T-cell (primary cell): ENCODE measurements at regions of chr2 and their contacts with region 1.

Region 1: GRCh38 chr2:85611705-85612587 is at the start of gene C2orf68:
- DNase-seq: peak; percentile 56 to 85 (median 74)
- ATAC-seq: peak; percentile 68 to 74 (median 70)
- H3K4me3 ChIP-seq: peak within 1 kb of the TSS; percentile 59 to 71
- H3K4me3 Mint-ChIP-seq: peak within 1 kb of the TSS; percentile 93 to 98 (median 98)
- H3K27ac ChIP-seq: peak within 1 kb of the TSS; percentile 76
- H3K27ac Mint-ChIP-seq: peak within 1 kb of the TSS; percentile 93 to 94
- H3K4me1 ChIP-seq: peaks cover 8 to 40% of the 10 kb centered on the region in 2 experiments
- H3K4me1 Mint-ChIP-seq: peaks cover 23 to 40% (median 38%) of the 10 kb centered on the region in 3 donors
- H3K27me3 ChIP-seq: no peaks in the 10 kb centered on the region
- H3K27me3 Mint-ChIP-seq: no peaks in the 10 kb centered on the region
- total RNA-seq, gene C2orf68: 45.3 to 77.9 (median 62.4) TPM

Region 2: DNA sequence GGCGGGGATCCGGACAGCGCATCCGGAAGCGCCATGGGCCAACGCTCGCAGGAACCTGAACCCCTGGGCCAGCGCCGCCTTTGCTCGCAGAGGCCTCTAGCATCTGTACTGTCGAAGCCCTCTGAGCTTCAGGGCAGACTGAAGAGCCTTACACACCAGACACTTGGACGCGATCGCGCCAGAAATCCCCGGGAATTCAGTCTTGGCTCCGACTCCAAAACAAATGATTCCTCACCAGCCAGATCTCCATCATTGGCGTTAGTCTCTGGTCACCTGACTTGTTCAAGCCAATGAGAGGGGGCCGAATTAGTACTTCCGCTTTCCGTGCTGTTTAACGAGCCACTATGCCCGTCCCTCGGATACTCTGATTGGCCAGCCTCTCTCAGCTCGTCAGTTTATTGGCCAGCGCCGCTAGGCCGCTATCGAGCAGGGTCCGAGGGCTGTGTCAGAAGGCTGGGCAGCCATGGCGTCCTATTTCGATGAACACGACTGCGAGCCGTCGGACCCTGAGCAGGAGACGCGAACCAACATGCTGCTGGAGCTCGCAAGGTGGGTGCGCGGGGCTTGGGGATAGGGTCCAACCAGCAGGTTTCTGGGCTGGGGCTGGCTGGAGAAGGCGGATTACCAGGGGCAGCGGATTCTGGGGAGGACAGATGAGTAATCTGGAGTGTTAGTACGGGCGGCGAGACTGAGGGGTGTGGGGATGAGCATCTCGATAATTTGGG is 16.5 kb before region 1 on chr2 and contains the start of gene RNF181:
- CTCF ChIA-PET with region 1: no interaction called
- POLR2A ChIA-PET with region 1: interaction called, 3 to 15 read pairs
- DNase-seq: peak; percentile 73 to 98 (median 89)
- ATAC-seq: peak; percentile 99
- H3K4me3 ChIP-seq: peak within 1 kb of the TSS; percentile 92 to 95
- H3K4me3 Mint-ChIP-seq: peak within 1 kb of the TSS; percentile 99
- H3K27ac ChIP-seq: peak within 1 kb of the TSS; percentile 75
- H3K27ac Mint-ChIP-seq: peak within 1 kb of the TSS; percentile 98 to 99
- H3K4me1 ChIP-seq: peaks cover 12 to 33% of the 10 kb centered on the region in 2 experiments
- H3K4me1 Mint-ChIP-seq: peaks cover 37 to 38% (median 38%) of the 10 kb centered on the region in 3 donors
- H3K27me3 ChIP-seq: no peaks in the 10 kb centered on the region
- H3K27me3 Mint-ChIP-seq: no peaks in the 10 kb centered on the region
- total RNA-seq, gene RNF181: 49.9 to 74.6 (median 64.3) TPM

Region 3: DNA sequence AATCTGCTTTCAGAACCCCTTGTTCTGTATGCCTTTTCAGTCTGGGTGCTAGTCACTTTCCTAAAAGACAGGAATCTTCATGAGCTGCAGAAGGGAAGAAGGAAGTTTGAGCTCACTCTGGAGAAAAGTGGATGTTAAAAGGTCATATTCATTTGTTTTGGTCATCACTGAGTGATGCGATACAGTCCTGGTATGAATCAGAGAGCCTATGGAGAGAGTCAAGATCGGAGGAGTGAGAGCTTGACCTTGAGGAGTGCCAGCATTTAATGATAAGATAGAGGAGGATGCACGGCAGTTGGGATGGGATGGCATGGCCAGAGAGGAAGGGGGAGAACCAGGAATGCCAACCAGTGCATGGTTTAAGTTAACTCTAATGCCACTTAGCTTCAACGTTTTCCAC is 23.7 kb after region 1 on chr2:
- CTCF ChIA-PET with region 1: interaction called, 4 to 5 read pairs
- POLR2A ChIA-PET with region 1: interaction called in 1 of 2 experiments, 11 read pairs
- DNase-seq: no peak
- ATAC-seq: no peak
- H3K4me3 ChIP-seq: no peak overlapping the region
- H3K4me3 Mint-ChIP-seq: no peak overlapping the region
- H3K27ac ChIP-seq: no peak overlapping the region
- H3K27ac Mint-ChIP-seq: peak overlapping the region in 1 of 2 donors; percentile 35
- H3K4me1 ChIP-seq: peaks cover 0 to 2% of the 10 kb centered on the region in 2 experiments
- H3K4me1 Mint-ChIP-seq: peaks cover 17 to 20% (median 17%) of the 10 kb centered on the region in 3 donors
- H3K27me3 ChIP-seq: no peaks in the 10 kb centered on the region
- H3K27me3 Mint-ChIP-seq: no peaks in the 10 kb centered on the region

Region 4: GRCh38 chr2:86420913-86421312 is 809.0 kb after region 1 on chr2:
- CTCF ChIA-PET with region 1: no interaction called
- POLR2A ChIA-PET with region 1: no interaction called
- DNase-seq: no peak
- ATAC-seq: no peak
- H3K4me3 ChIP-seq: no peak overlapping the region
- H3K4me3 Mint-ChIP-seq: no peak overlapping the region
- H3K27ac ChIP-seq: no peak overlapping the region
- H3K27ac Mint-ChIP-seq: no peak overlapping the region
- H3K4me1 ChIP-seq: no peaks in the 10 kb centered on the region
- H3K4me1 Mint-ChIP-seq: peaks cover 0 to 2% (median 0%) of the 10 kb centered on the region in 3 donors
- H3K27me3 ChIP-seq: peaks cover 0 to 4% of the 10 kb centered on the region in 2 experiments
- H3K27me3 Mint-ChIP-seq: peaks cover 17 to 41% of the 10 kb centered on the region in 2 donors